Endothelial cell of umbilical vein (primary cell): ENCODE measurements at regions of chr6 and their contacts with region 1.

Region 1: DNA sequence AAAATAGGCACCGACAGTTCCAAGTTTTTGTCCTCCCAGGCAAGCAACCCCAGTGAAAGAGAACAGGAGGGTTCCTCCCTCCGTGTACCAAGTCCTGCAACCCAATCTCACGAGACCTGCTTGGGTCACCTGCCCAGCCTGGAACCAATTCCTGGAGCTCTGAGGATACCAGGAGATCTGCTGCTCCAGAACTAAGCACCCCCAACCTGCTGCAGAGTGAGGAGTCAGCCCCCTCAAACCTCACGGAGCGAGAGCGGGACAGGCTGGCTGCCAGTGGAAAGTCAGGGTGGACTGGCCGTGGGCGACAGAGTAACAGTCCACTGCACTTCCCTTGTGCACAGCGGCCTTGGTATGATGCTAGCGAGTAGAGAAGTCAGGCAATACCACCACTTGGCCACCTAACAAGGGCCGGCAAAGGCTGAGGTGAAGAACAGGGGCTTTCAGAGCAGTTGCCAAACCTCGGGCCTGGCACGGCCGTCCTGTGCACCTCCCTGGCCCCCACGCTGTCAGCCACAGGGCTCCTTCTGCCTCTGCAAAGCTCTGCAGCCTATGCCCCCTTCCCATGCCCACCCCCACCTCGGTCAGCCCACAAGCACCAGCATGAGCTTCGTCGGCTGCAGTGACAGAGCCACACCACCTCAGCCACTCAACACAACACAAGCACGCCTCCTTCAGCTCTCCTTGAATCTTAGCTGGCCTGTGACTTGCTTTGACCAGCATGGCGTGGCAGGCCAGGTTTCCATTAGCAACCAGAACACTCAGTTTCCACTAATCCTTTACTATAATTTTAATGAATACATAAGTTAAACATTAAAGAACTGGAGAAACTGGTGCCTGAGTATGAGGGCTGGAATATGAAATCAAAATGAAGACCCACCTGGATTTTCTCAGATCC is 127.7 kb upstream of the SNX9 start:
- DNase-seq: no peak
- H3K4me3 ChIP-seq: no peak overlapping the region
- H3K27ac ChIP-seq: no peak overlapping the region
- H3K4me1 ChIP-seq: peaks cover 3% of the 10 kb centered on the region
- H3K27me3 ChIP-seq: peaks cover 12 to 15% of the 10 kb centered on the region in 2 experiments
- CTCF ChIP-seq: no peak
- POLR2A ChIP-seq: no peak

Region 2: DNA sequence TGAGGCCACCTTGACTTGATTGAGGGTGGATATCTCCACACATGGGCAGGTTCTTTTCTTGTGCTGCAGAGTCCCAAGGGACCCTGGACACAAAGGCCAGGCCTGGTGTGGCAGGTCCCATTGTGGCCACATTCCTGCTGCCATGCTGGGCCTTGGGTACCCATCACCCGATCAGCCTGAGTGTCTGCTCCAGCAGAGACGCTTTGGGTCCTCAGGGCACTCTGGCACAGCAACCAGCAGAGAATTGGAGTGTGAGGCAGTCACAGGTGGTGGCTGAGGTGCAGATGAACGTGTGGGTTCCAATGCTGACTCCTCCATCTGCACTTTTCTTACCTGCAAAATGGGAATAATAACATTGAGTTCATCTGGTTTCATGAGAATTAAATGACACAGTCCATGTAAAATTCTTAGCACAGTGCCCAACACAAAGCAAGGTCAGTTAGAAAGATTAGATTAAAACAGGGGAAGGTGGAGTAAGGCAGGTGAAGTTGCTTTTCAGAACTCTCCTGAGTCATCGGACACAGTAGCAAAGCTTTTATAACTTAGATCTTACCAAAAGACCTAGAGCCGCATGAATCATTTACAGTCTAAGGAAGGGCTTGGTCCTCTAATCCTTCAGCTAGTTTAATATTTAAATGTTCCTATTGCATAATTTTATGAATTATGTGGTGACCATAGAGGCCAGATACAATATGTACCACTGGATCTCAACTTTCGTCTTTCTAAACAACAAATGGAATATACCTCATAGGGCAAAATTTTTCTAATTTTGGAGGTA is 74.6 kb before region 1 on chr6:
- CTCF ChIA-PET with region 1: no interaction called
- POLR2A ChIA-PET with region 1: no interaction called
- dilution Hi-C with region 1: no loop called
- intact Hi-C with region 1: loop called (anchors 2 kb)
- DNase-seq: no peak
- H3K4me3 ChIP-seq: no peak overlapping the region
- H3K27ac ChIP-seq: no peak overlapping the region
- H3K4me1 ChIP-seq: no peaks in the 10 kb centered on the region
- H3K27me3 ChIP-seq: no peaks in the 10 kb centered on the region
- CTCF ChIP-seq: no peak
- POLR2A ChIP-seq: no peak

Region 3: GRCh38 chr6:157724960-157725741 is 29.8 kb after region 1 on chr6:
- CTCF ChIA-PET with region 1: no interaction called
- POLR2A ChIA-PET with region 1: no interaction called
- dilution Hi-C with region 1: no loop called
- intact Hi-C with region 1: no loop called
- DNase-seq: no peak
- H3K4me3 ChIP-seq: no peak overlapping the region
- H3K27ac ChIP-seq: no peak overlapping the region
- H3K4me1 ChIP-seq: no peaks in the 10 kb centered on the region
- H3K27me3 ChIP-seq: peaks cover 4 to 17% of the 10 kb centered on the region in 2 experiments
- CTCF ChIP-seq: no peak
- POLR2A ChIP-seq: no peak

Region 4: DNA sequence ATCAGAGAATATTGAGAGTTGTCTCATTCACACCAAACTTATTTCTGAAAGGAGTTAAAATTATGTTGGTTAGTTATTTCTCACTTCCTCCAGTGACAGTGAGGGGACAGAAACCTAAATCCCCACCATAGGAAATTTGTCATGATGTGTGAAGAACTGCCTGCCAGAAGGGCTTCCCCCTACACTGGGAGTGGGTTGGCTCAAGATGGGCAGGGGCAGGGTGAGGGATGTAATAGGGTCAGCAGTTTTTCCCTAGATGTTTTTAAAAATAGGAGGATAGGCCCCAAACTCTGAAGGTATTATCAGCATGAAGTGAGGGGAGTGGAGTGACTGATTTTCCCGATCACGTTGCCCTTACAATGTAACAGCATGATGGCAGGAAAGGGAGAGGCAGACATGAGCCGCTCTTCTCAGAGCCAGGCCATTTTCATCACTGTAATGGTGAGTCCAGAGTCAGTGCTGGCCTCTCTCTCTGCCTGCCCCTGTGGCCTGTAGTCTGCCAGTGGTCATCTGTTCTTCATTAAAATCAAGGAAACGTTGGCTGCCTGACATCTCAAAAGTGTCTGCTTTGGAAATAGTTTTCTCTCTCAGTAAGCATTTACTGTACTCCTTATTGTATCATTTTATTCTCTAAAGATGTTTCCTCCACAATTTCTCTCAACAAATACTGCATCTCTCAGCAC is 226.4 kb after region 1 on chr6:
- CTCF ChIA-PET with region 1: no interaction called
- POLR2A ChIA-PET with region 1: no interaction called
- dilution Hi-C with region 1: no loop called
- intact Hi-C with region 1: no loop called
- DNase-seq: no peak
- H3K4me3 ChIP-seq: no peak overlapping the region
- H3K27ac ChIP-seq: no peak overlapping the region
- H3K4me1 ChIP-seq: no peaks in the 10 kb centered on the region
- H3K27me3 ChIP-seq: no peaks in the 10 kb centered on the region
- CTCF ChIP-seq: no peak
- POLR2A ChIP-seq: no peak